Caco-2 (cell line): ENCODE measurements at regions of chr16 and their contacts with region 1.

Region 1: DNA sequence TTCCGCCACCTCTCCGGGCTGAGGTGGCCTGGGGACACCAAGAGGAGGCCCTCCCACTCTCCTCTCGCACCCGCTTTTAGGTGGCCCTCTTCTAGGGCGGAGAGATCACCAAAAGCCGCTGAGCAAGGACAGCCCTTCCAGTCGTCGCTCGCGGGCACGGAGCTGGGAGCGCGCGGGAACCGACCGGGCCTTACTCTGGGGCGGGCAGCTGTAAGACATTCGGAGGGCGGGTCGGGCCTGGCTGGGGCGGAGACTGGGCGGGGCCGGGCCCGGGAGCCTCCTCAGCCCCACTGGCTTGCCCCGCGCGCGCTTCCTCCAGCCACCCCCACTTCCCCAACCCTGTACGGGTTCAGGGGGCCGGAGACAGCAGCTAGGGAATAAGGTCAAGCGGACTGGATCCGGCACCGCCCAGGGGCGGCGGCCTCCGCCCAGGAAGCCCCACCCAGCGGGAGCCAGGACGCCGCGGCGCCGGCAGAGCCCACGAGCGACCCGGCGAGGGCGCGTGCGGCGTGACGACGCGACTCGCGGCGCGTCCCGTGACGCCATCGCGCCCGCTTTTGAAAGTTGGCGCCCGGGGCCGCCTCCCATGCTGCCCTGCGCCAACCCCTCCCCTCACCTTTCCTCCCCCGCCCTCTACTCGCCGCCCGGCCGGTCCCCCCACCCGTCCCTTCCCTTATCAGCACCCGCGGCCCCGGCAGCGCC is 351 bp upstream of the CTCF start:
- DNase-seq: peak; percentile 99
- H3K4me3 ChIP-seq: peak overlapping the region; percentile 100
- H3K4me3 Mint-ChIP-seq: peak overlapping the region; percentile 95
- H3K27ac Mint-ChIP-seq: peak overlapping the region; percentile 93
- H3K4me1 ChIP-seq: peaks cover 14% of the 10 kb centered on the region
- H3K4me1 Mint-ChIP-seq: peaks cover 23% of the 10 kb centered on the region
- H3K27me3 ChIP-seq: no peaks in the 10 kb centered on the region
- H3K27me3 Mint-ChIP-seq: no peaks in the 10 kb centered on the region
- CTCF ChIP-seq: no peak

Region 2: GRCh38 chr16:67537270-67537635 is 24.7 kb before region 1 on chr16:
- CTCF ChIA-PET with region 1: interaction called, 18 read pairs
- POLR2A ChIA-PET with region 1: interaction called, 6 read pairs
- intact Hi-C with region 1: no loop called
- DNase-seq: peak; percentile 56 to 73
- H3K4me3 ChIP-seq: peak overlapping the region; percentile 80
- H3K4me3 Mint-ChIP-seq: peak overlapping the region; percentile 80
- H3K27ac Mint-ChIP-seq: peak overlapping the region; percentile 60
- H3K4me1 ChIP-seq: peaks cover 22% of the 10 kb centered on the region
- H3K4me1 Mint-ChIP-seq: peaks cover 41% of the 10 kb centered on the region
- H3K27me3 ChIP-seq: no peaks in the 10 kb centered on the region
- H3K27me3 Mint-ChIP-seq: no peaks in the 10 kb centered on the region
- CTCF ChIP-seq: no peak

Region 3: DNA sequence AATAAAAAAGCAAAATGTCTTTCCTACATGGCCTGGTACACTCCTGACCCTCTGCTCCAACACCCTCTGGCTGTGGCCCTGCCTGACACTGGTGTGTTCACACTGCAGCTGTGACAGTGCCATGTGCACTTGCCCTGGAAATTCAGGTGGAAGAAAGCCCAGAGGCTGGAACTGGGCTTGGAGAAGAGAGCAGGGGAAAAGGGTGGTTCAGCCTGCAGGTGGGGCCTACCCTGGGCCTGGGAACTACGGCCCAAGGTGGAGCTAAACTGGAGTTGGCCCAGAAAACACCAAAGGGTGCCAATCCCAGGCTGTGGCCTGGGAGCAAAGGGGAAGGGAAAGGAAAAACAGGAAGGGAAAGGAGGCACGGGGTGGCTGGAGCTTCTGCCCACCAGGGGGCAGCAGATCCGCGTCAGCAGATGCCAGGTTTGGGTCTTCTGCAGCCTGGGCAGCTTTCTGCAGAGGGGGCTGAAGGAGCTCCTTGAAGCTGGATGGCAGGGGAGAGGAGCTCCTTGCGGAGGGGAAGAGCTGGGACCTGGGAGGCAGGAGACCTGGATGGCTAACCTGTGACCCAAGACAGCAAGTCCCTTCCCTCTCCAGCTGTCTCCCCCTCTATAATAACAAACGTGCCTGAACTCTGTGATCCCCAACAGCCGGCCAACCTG is 15.1 kb before region 1 on chr16:
- CTCF ChIA-PET with region 1: interaction called, 68 read pairs
- POLR2A ChIA-PET with region 1: interaction called, 19 read pairs
- intact Hi-C with region 1: loop called (anchors 1 kb)
- DNase-seq: peak; percentile 78 to 90
- H3K4me3 ChIP-seq: no peak overlapping the region
- H3K4me3 Mint-ChIP-seq: no peak overlapping the region
- H3K27ac Mint-ChIP-seq: peak overlapping the region; percentile 68
- H3K4me1 ChIP-seq: no peaks in the 10 kb centered on the region
- H3K4me1 Mint-ChIP-seq: peaks cover 5% of the 10 kb centered on the region
- H3K27me3 ChIP-seq: no peaks in the 10 kb centered on the region; the same call in 1 of the 2 replicates
- H3K27me3 Mint-ChIP-seq: no peaks in the 10 kb centered on the region
- CTCF ChIP-seq: peak; percentile 95 to 98

Region 4: DNA sequence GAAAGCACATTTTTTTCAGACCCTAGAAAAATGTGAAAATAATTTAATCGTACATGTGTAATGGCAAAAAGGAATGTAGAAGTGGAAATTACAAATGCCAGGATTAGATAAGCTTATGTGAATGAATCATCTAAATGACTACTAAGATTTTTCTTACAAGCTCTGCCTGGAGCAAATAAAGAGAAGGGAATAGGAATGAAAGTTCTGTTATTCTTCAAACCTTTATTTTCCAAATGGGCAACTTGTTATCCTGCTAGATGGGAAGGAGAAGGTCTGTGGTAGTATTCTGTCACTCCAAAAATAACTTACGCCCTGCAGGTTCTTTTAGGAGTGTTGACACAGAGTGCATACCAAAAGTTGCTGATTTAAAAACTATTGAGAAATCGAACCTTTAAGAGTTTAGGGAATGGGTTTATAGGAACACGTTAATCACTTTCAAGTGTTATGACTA is 10.0 kb after region 1 on chr16:
- CTCF ChIA-PET with region 1: interaction called, 15 read pairs
- POLR2A ChIA-PET with region 1: no interaction called
- intact Hi-C with region 1: no loop called
- DNase-seq: no peak
- H3K4me3 ChIP-seq: no peak overlapping the region
- H3K4me3 Mint-ChIP-seq: no peak overlapping the region
- H3K27ac Mint-ChIP-seq: no peak overlapping the region
- H3K4me1 ChIP-seq: 0 out of 2 replicates have a peak, but pooled peaks cover 4% of the 10 kb centered on the region
- H3K4me1 Mint-ChIP-seq: peaks cover 4% of the 10 kb centered on the region
- H3K27me3 ChIP-seq: no peaks in the 10 kb centered on the region
- H3K27me3 Mint-ChIP-seq: no peaks in the 10 kb centered on the region
- CTCF ChIP-seq: no peak

Region 5: GRCh38 chr16:67641779-67642708 is 80.1 kb after region 1 on chr16:
- CTCF ChIA-PET with region 1: interaction called, 11 read pairs
- POLR2A ChIA-PET with region 1: interaction called, 5 read pairs
- intact Hi-C with region 1: loop called (anchors 2 kb)
- DNase-seq: no peak
- H3K4me3 ChIP-seq: no peak overlapping the region
- H3K4me3 Mint-ChIP-seq: no peak overlapping the region
- H3K27ac Mint-ChIP-seq: no peak overlapping the region
- H3K4me1 ChIP-seq: peaks cover 4% of the 10 kb centered on the region; the same call in 1 of the 2 replicates
- H3K4me1 Mint-ChIP-seq: no peaks in the 10 kb centered on the region
- H3K27me3 ChIP-seq: no peaks in the 10 kb centered on the region
- H3K27me3 Mint-ChIP-seq: no peaks in the 10 kb centered on the region
- CTCF ChIP-seq: no peak

Region 6: DNA sequence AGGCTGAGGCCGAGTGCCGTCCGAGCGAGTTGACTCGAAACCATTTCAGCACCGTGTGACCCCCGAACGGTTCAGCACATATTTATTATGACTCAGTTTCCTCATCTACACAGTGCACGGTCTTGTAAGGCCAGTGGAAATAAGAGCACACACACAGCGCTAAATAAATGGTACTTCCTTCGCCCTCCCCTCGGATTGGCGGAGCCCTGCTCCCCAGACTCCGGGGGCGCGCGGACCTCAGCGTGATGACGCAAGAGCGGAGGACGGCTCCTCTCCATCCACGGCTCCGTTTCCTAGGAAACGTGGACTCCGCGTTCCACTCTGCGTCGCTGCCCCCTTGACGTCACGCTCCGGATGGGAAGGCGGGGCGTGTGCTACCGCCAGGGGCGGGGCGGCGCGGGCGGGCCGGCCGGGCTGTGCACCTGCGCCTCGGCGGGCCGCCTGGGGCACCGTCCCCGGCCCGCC is 98.6 kb after region 1 on chr16 and contains the start of gene PARD6A:
- CTCF ChIA-PET with region 1: interaction called, 3 read pairs
- POLR2A ChIA-PET with region 1: interaction called, 19 read pairs
- intact Hi-C with region 1: loop called (anchors 1 kb)
- DNase-seq: peak; percentile 96 to 97
- H3K4me3 ChIP-seq: peak within 1 kb of the TSS; percentile 52
- H3K4me3 Mint-ChIP-seq: peak within 1 kb of the TSS; percentile 96
- H3K27ac Mint-ChIP-seq: peak within 1 kb of the TSS; percentile 96
- H3K4me1 ChIP-seq: peaks cover 12% of the 10 kb centered on the region
- H3K4me1 Mint-ChIP-seq: no peaks in the 10 kb centered on the region
- H3K27me3 ChIP-seq: no peaks in the 10 kb centered on the region
- H3K27me3 Mint-ChIP-seq: no peaks in the 10 kb centered on the region
- CTCF ChIP-seq: no peak
- total RNA-seq, gene PARD6A: 7.1 and 8.4 TPM in 2 replicates

Region 7: GRCh38 chr16:67806428-67807147 is 244.6 kb after region 1 on chr16 and contains the starts of genes RANBP10 and TSNAXIP1:
- CTCF ChIA-PET with region 1: no interaction called
- POLR2A ChIA-PET with region 1: no interaction called
- intact Hi-C with region 1: loop called (anchors 2 kb)
- DNase-seq: peak; percentile 99
- H3K4me3 ChIP-seq: peak within 1 kb of the TSS; percentile 88
- H3K4me3 Mint-ChIP-seq: peak within 1 kb of the TSS; percentile 83
- H3K27ac Mint-ChIP-seq: peak within 1 kb of the TSS; percentile 81
- H3K4me1 ChIP-seq: peaks cover 10% of the 10 kb centered on the region; the same call in 1 of the 2 replicates
- H3K4me1 Mint-ChIP-seq: peaks cover 9% of the 10 kb centered on the region
- H3K27me3 ChIP-seq: no peaks in the 10 kb centered on the region
- H3K27me3 Mint-ChIP-seq: no peaks in the 10 kb centered on the region
- CTCF ChIP-seq: no peak
- total RNA-seq, gene RANBP10: 21.8 and 23.8 TPM in 2 replicates
- total RNA-seq, gene TSNAXIP1: 0.84 and 0.91 TPM in 2 replicates